ENCODE measurements at regions of chr13 and their contacts with region 1.

Region 1: DNA sequence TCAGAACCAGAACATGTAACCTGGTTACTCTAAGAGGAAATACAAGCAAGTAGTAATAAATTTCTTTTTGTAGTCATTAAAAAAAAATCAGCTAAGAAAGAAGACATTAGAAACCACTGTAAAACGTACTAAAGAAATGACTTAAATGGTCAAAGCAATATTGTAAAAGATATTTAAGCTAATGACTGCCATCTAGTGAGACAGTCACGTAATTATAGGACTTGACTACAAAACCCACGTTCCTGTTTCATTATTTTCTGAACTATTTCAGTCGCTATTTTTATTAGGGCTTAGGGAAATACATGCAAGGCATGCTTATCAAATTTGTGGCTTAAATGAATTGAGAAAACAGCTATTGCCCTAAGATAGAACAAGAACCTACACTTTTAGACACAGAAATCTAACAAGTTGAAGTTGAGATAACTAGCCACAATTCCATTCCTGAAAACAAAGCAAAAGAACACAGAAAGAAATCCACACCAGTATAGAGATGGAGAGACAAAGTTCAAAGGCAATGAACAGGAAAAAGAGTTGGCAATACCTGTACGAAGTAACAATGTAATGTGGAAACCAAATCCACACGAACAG is 17.9 kb downstream of the ALG5 start:
- DNase-seq: no peak
- ATAC-seq: no peak
- H3K4me3 Mint-ChIP-seq: no peak overlapping the region
- H3K27ac Mint-ChIP-seq: no peak overlapping the region
- H3K4me1 Mint-ChIP-seq: peaks cover 3% of the 10 kb centered on the region
- H3K27me3 Mint-ChIP-seq: no peaks in the 10 kb centered on the region

Region 2: DNA sequence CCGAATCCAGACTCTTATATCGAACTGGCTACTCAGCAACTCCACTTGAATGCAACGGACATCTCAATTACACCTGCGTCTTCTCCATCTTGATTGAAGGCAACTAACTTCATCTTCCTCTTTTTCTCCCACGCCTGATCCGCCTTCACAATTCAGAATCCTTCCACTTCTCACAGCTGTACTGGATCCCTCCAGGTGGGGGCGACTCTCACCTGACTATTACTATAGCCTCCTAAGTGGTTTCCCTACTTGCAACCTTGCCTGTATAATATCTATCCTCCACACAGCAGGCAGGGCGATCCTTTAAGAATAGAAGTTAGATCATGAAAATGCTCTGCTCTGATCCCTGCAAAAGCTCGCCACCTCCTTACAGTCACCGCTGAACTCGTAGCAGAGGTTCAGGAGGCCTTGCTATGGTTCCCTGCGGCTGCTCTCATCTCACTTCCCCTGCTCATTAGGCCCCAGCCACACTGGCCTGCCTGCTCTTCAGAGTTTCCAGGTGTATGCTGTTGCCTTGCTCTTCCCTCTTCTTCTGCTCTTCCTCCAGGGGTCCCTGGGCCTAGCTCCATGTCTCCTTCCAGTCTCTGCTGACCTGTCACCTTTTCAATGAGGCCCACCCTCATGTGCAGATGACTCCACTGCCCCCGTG is 130.3 kb before region 1 on chr13:
- CTCF ChIA-PET with region 1: interaction called, 12 read pairs
- POLR2A ChIA-PET with region 1: no interaction called
- DNase-seq: peak; percentile 29
- ATAC-seq: no peak
- H3K4me3 Mint-ChIP-seq: no peak overlapping the region
- H3K27ac Mint-ChIP-seq: no peak overlapping the region
- H3K4me1 Mint-ChIP-seq: no peaks in the 10 kb centered on the region
- H3K27me3 Mint-ChIP-seq: no peaks in the 10 kb centered on the region

Region 3: DNA sequence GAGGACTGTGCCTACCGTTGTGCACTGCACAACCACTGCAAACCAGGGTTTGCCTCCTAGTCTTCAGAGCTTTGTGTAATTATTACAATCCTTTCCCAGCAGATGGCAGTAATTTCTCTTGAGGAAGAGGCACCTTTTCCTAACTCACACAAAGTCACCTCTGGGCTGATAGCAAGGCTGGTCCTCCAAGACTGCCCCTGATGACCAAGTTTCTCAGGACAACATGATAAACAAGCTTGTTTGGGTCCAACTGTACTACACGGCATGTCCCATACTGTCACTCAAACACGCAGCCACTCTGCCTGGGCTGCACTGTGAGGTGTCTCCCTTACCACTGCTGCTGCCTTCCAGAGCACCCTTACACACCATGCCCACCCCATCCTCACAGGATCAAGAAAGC is 123.0 kb before region 1 on chr13:
- CTCF ChIA-PET with region 1: interaction called, 32 read pairs
- POLR2A ChIA-PET with region 1: no interaction called
- DNase-seq: no peak
- ATAC-seq: peak; percentile 70
- H3K4me3 Mint-ChIP-seq: no peak overlapping the region
- H3K27ac Mint-ChIP-seq: no peak overlapping the region
- H3K4me1 Mint-ChIP-seq: peaks cover 13% of the 10 kb centered on the region
- H3K27me3 Mint-ChIP-seq: peaks cover 18% of the 10 kb centered on the region

Region 4: GRCh38 chr13:36992340-36992739 is 11.1 kb after region 1 on chr13:
- CTCF ChIA-PET with region 1: interaction called, 17 read pairs
- POLR2A ChIA-PET with region 1: interaction called, 3 read pairs
- DNase-seq: no peak
- ATAC-seq: no peak
- H3K4me3 Mint-ChIP-seq: no peak overlapping the region
- H3K27ac Mint-ChIP-seq: no peak overlapping the region
- H3K4me1 Mint-ChIP-seq: peaks cover 14% of the 10 kb centered on the region
- H3K27me3 Mint-ChIP-seq: no peaks in the 10 kb centered on the region

Region 5: DNA sequence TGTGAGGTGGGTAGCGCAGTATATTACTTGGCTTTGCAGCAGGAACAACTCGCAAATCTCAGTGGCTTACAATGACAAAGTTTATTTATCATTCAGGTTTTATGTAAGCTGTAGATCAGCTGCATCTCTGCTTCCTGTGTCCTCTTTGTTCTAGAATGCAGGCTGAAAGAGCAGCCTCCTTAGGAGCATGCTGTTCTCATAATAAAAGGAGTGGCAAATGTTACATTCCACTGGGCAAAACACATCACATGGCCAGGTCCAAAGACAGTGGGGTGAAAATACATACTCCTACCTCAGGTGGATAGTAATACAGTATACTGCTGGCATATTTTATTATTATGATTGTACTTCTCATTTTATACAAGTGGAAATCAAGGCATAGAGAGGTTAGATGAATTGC is 125.4 kb after region 1 on chr13:
- CTCF ChIA-PET with region 1: no interaction called
- POLR2A ChIA-PET with region 1: no interaction called
- DNase-seq: no peak
- ATAC-seq: no peak
- H3K4me3 Mint-ChIP-seq: no peak overlapping the region
- H3K27ac Mint-ChIP-seq: no peak overlapping the region
- H3K4me1 Mint-ChIP-seq: no peaks in the 10 kb centered on the region
- H3K27me3 Mint-ChIP-seq: no peaks in the 10 kb centered on the region